A549 (cell line): ENCODE measurements at regions of chr15 and their contacts with region 1.

Region 1: GRCh38 chr15:33292717-33293307 is 18.0 kb upstream of the RYR3 start:
- DNase-seq: peak; percentile 59 to 74
- ATAC-seq: peak; percentile 84 to 95
- H3K4me3 ChIP-seq: no peak overlapping the region
- H3K27ac ChIP-seq: no peak overlapping the region
- H3K4me1 ChIP-seq: no peaks in the 10 kb centered on the region
- CTCF ChIP-seq: peak; percentile 92
- EP300 ChIP-seq: no peak
- POLR2A ChIP-seq: no peak
- RAD21 ChIP-seq: peak; percentile 88 to 89

Region 2: DNA sequence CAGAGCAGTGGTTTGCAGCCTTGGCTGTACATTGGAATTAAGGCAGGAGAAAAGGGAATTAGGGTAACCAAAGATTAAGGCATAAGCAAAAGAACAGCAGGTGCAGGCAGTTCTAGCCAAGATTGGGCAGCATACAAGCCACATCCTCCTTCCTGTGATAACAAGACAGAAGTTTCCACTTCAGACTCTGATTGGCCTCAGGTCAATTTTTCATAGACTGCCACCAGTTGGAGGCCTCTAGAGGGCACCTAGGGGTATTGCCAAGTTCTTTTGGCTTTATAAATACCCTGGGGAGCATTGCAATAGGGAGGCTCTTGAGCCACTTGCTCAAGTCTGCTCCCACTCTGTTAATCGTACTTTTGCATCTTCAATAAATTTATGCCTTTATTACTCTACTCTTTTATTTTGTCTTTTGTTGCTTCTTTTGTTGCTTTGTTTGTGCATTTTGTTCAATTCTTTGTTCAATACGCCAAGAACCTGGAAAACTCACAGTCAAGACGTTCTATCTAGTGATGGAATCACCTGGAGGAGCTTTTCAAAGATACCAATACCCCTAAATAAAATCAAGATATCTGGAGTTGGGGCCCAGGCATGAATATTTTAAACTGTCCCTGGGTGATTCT is 66.1 kb before region 1 on chr15:
- CTCF ChIA-PET with region 1: interaction called, 10 read pairs
- POLR2A ChIA-PET with region 1: no interaction called
- DNase-seq: peak; percentile 85 to 86
- ATAC-seq: peak; percentile 88 to 97
- H3K4me3 ChIP-seq: no peak overlapping the region
- H3K27ac ChIP-seq: no peak overlapping the region
- H3K4me1 ChIP-seq: no peaks in the 10 kb centered on the region
- CTCF ChIP-seq: peak; percentile 57
- EP300 ChIP-seq: no peak
- POLR2A ChIP-seq: no peak
- RAD21 ChIP-seq: peak; percentile 37 to 39; a peak in 4 of 5 replicates

Region 3: DNA sequence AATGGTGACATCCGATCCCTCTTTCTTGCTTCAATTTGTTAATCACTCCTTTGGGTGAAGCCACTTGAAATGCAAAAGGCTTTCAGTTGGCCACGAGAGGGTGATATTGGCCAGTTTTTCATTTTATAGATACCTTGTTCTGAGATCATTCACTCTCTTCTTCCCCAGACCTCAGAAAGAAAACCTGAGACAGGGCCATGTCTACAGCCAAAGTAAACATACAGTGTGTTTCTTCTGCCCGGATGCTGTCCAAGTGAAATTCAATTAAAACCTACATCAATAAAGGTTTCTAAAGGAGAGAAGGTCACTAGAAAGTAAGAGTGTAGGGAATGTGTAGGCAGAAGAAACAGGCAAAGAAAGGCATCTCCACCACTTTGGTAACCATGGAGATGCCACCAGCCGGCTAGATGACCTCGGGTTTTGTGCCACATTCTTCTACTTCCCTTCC is 58.8 kb before region 1 on chr15:
- CTCF ChIA-PET with region 1: interaction called, 15 read pairs
- POLR2A ChIA-PET with region 1: no interaction called
- DNase-seq: peak; percentile 55 to 65
- ATAC-seq: peak; percentile 84 to 93
- H3K4me3 ChIP-seq: no peak overlapping the region
- H3K27ac ChIP-seq: no peak overlapping the region
- H3K4me1 ChIP-seq: no peaks in the 10 kb centered on the region
- CTCF ChIP-seq: peak; percentile 87
- EP300 ChIP-seq: no peak
- POLR2A ChIP-seq: no peak
- RAD21 ChIP-seq: peak; percentile 90 to 95

Region 4: DNA sequence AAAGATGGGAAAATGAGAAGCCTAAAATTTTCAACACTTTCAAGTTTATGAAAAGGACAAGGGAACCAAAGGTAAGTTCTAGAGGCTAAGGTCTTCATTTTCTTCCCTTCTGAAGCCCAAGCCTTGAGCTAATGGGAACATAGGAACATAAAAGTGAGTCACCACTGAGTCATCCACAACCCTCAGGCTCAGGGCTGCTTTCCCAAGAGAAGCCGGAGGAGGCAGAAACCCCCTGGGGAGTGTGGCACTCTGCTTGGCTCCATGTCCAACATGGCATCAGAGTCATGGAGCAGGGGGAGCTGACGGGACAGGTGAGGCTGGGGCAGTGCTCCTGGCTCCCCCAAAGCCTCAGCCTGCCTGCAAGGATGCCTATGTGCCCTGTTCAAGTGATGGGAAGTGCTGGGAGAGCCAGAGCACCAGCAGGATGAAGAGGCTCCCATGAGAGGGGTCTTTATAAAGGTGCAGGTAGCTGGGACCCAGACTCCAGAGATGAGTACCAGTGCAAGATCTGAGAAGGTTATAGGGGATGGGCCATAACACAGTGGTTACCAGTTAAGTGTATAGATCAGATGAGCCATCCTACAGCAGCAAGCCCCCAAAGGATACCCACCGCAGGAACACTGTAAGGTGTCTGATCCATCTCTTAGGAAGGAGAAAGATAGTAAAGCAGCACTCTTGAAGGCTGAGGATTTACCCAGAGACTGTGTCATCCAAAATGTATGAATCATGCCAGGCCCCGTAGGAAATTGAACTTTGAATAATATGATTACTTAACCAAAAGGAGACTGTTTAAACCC is 13.8 kb before region 1 on chr15:
- CTCF ChIA-PET with region 1: interaction called, 89 read pairs
- POLR2A ChIA-PET with region 1: no interaction called
- DNase-seq: peak; percentile 80 to 88
- ATAC-seq: peak; percentile 96 to 98
- H3K4me3 ChIP-seq: no peak overlapping the region
- H3K27ac ChIP-seq: peak overlapping the region; percentile 74 to 88
- H3K4me1 ChIP-seq: peaks cover 21% of the 10 kb centered on the region
- CTCF ChIP-seq: no peak
- EP300 ChIP-seq: peak in 1 of 2 experiments; percentile 25; a peak in 1 of 5 replicates
- POLR2A ChIP-seq: no peak
- RAD21 ChIP-seq: no peak; a peak in 1 of 5 replicates

Region 5: GRCh38 chr15:33309602-33310276 is 16.9 kb after region 1 on chr15:
- CTCF ChIA-PET with region 1: interaction called, 21 read pairs
- POLR2A ChIA-PET with region 1: no interaction called
- DNase-seq: peak in 1 of 2 experiments; percentile 46
- ATAC-seq: peak in 1 of 2 experiments; percentile 67; a peak in 3 of 6 replicates
- H3K4me3 ChIP-seq: no peak overlapping the region
- H3K27ac ChIP-seq: no peak overlapping the region
- H3K4me1 ChIP-seq: no peaks in the 10 kb centered on the region; the same call in 2 of the 3 replicates
- CTCF ChIP-seq: peak; percentile 14; the same call in 1 of the 3 replicates
- EP300 ChIP-seq: no peak
- POLR2A ChIP-seq: no peak
- RAD21 ChIP-seq: peak in 1 of 2 experiments; percentile 44; a peak in 2 of 5 replicates

Region 6: GRCh38 chr15:33330931-33331330 is 38.1 kb after region 1 on chr15:
- CTCF ChIA-PET with region 1: no interaction called
- POLR2A ChIA-PET with region 1: no interaction called
- DNase-seq: no peak
- ATAC-seq: no peak
- H3K4me3 ChIP-seq: no peak overlapping the region
- H3K27ac ChIP-seq: no peak overlapping the region
- H3K4me1 ChIP-seq: no peaks in the 10 kb centered on the region
- CTCF ChIP-seq: no peak
- EP300 ChIP-seq: no peak
- POLR2A ChIP-seq: no peak
- RAD21 ChIP-seq: no peak

Region 7: GRCh38 chr15:33706173-33706572 is 413.4 kb after region 1 on chr15:
- CTCF ChIA-PET with region 1: interaction called, 159 read pairs
- POLR2A ChIA-PET with region 1: interaction called, 7 read pairs
- DNase-seq: no peak
- ATAC-seq: no peak
- H3K4me3 ChIP-seq: no peak overlapping the region
- H3K27ac ChIP-seq: no peak overlapping the region
- H3K4me1 ChIP-seq: no peaks in the 10 kb centered on the region
- CTCF ChIP-seq: no peak
- EP300 ChIP-seq: no peak
- POLR2A ChIP-seq: no peak
- RAD21 ChIP-seq: no peak

Region 8: DNA sequence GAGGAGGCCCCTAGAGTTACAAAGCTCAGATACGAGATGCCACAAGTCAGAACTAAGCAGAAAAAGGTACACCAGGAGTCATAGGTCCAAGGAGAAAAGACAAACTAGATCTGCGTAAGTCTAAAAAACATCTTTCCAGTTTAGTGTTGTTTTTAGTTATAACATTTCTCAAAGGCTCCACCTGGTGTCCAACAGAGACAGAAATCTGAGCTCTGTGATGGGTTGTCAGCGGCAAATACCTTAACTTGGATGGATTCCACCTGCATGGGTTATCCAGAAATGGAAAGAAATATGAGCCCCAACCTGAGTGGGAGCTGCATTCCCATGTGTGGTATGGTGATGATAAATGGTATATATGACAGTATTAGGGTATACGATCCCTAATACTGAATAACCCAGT is 436.8 kb after region 1 on chr15:
- CTCF ChIA-PET with region 1: interaction called, 41 read pairs
- POLR2A ChIA-PET with region 1: no interaction called
- DNase-seq: peak; percentile 25 to 36
- ATAC-seq: peak; percentile 52 to 63; a peak in 4 of 6 replicates
- H3K4me3 ChIP-seq: no peak overlapping the region
- H3K27ac ChIP-seq: no peak overlapping the region
- H3K4me1 ChIP-seq: no peaks in the 10 kb centered on the region
- CTCF ChIP-seq: peak; percentile 57
- EP300 ChIP-seq: no peak
- POLR2A ChIP-seq: no peak
- RAD21 ChIP-seq: peak; percentile 37 to 49; a peak in 3 of 5 replicates